ENCODE measurements at regions of chr5 and their contacts with region 1.

Region 1: DNA sequence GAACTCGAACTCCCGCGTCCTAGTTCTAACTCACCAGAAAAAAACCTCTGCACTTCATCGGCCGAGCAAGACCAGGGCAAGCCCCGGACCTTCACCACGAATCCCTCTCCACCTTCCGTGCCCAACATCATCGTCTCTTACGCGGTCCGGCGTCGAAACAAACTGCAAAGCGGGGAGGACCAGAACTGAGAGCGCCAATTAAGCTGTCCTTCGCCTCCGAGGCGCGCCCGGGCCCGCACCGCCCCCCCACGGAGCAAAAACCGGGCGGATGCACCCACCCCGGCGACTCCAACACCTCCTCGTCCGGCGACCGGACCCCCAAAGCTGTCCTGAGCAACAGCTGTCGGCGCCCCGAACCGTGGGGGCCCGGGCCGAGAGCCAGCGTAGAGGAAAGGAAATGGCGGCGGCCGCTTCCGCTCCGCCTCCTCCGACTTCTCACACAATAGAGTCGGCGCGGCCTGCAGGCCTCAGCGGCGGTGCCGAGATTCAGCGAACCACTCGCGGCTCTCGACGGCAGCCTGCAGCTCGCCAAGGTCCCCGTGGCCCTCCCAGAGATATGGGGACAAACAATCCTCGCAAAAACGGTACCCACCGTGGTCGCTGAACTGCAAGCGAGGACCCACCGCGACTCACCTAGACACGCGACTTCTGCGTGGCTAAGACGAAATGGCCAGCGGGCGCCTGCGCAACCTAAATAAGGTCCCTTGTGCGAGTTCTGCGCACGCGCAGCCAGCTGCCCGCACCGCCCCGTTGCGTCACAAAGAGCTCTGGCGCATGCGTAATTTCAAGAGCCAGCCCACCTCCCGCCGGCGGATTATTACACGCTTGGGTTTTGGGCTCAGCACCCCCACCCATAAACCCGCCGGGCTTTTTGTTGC is at the start of gene HNRNPH1:
- DNase-seq: peak; percentile 99

Region 2: GRCh38 chr5:179378441-179379271 is 244.6 kb before region 1 on chr5:
- CTCF ChIA-PET with region 1: no interaction called
- POLR2A ChIA-PET with region 1: no interaction called
- DNase-seq: no peak

Region 3: DNA sequence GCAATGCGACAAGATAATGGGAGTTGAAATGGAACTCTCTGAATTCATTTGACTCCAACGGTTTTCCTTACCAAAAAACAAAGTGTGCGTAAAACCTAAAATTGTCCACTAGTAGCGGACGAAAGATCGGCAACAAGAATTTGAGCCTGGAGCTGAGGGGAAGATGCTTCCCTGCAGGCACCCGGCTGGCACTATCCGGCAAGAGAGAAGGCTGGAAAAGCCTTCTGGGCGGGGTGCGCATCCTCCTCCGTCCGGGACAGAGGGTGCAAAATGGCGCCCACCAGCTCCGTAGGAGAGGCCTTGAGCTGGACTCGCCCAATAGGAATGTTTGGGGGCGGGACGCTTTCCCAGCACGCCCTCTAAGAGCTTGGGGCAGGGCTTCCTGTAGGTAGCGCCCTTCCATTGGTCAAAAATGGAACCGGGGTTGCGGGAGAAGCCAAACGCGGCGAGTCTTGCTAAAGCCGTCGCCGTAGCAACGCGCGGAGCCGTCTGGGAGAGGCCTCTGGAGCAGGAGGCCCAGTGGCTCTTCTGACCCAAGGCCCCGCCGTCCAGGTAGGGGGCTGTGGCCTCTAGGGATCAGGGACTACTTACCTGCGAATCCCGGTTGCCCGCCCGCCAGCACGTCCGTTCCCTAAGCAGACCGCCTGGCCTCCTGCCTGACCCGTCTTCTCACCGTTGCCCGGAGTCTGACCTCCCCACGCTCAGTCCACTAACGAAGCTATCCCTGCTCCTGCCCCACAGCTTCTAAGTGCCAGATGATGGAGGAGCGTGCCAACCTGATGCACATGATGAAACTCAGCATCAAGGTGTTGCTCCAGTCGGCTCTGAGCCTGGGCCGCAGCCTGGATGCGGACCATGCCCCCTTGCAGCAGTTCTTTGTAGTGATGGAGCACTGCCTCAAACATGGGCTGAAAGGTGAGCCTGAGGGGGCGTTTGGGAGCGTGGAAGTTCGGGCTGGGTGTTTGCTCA is 63.7 kb before region 1 on chr5:
- CTCF ChIA-PET with region 1: no interaction called
- POLR2A ChIA-PET with region 1: interaction called, 15 read pairs
- DNase-seq: peak; percentile 98

Region 4: DNA sequence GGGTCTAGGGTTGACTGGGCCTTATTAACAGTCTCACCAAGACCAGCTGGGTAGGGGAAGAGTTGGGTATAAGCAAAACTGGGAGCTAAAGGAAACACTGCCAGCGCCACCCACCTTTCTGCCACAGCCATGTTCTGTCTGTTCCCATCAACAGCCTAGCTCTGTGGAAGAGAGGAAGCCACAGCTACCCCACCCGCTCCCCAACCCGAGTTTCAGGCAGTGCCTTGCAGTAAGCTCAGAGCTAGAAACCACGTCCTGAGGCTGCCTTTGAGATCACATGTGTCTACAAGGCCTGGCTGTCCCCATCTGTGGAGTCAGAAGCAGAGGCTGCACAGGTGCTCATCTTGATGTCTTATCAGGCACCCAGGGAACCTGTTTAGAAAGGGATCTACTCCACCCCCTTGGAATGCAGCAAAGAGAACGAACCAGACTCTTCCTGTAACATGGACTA is 15.1 kb before region 1 on chr5:
- CTCF ChIA-PET with region 1: interaction called, 6 read pairs
- POLR2A ChIA-PET with region 1: interaction called, 67 read pairs
- DNase-seq: no peak

Region 5: DNA sequence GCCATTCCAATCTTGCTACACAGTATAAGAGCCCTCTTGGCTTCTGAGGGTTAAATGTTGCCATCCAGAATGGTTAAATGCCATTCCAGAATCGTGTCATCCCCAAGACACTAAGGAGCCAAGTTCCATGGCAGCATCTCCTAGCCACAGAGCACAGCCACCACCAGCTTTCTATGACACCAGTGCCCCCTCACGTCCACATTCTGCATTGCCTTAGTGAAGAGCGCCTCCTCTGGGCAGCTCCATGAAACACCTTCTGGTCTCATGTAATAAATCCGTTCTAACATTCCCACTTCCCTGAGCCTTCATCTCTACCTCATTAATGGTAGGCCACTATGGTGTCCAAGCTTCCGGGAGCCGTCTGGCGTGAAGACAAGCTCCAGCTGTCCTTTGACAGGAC is 45.1 kb after region 1 on chr5:
- CTCF ChIA-PET with region 1: interaction called, 10 read pairs
- POLR2A ChIA-PET with region 1: interaction called, 47 read pairs
- DNase-seq: peak; percentile 85

Measured in HEK293T (cell line).